Activated CD8-positive, alpha-beta T cell treated with anti-CD3 and anti-CD28 coated beads, Interleukin-2, amount 10 ng/mL, durations not matched to agents 7 days and 5 days (primary cell): ENCODE measurements at regions of chr17 and their contacts with region 1.

Region 1: GRCh38 chr17:29617125-29617480 is 5.6 kb downstream of the CORO6 start:
- DNase-seq: peak; percentile 95
- ATAC-seq: peak; percentile 65
- H3K4me3 Mint-ChIP-seq: peak overlapping the region; percentile 81
- H3K27ac Mint-ChIP-seq: peak overlapping the region; percentile 94
- H3K4me1 Mint-ChIP-seq: peaks cover 64% of the 10 kb centered on the region
- H3K27me3 Mint-ChIP-seq: peaks cover 3% of the 10 kb centered on the region

Region 2: DNA sequence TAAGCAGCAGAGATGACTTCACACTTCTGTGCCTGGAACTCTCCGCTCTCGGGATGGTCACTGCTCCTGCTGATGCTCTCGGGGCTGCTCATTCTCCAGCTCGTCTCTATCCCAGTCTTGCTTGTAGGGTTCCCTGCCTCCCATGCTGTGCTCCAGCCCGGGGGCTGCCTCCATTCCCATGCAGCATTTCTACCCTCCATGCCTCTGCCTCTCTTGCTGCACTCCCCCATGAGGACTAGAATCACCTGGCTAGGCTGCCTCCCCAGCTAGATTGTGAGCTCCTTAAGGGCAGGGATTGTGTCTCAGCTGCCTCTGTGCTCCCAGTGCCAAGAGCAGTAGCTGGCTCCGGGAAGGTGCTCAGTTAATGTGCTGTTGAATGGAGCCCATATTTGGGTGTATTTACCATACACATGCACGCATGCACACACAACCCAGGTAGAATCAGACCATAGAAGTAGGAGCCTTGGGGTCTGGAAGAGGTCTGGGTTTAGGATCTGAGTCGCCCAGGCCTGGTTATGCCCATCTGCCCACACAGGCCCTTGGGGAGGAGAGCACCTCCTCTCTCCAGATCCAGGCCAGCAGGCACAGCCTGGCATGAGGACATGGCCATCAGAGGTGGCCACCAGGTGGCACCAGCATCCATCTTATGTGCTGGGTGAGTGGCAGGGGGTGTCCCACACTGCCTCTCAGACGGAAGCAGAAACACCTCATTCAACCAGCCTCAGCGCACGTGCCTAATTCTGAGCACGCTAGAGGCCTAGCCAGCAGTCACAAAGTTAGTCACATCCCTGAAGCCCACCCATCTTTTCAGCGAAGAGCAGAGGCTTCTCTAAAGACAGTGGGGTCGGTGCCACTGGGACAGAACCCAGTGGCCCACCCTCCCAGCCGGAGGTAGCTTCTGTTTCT is 37.0 kb before region 1 on chr17:
- CTCF ChIA-PET with region 1: interaction called, 99 read pairs
- POLR2A ChIA-PET with region 1: interaction called, 23 read pairs
- DNase-seq: peak; percentile 92
- ATAC-seq: peak; percentile 97
- H3K4me3 Mint-ChIP-seq: no peak overlapping the region
- H3K27ac Mint-ChIP-seq: peak overlapping the region; percentile 84
- H3K4me1 Mint-ChIP-seq: peaks cover 30% of the 10 kb centered on the region
- H3K27me3 Mint-ChIP-seq: no peaks in the 10 kb centered on the region

Region 3: DNA sequence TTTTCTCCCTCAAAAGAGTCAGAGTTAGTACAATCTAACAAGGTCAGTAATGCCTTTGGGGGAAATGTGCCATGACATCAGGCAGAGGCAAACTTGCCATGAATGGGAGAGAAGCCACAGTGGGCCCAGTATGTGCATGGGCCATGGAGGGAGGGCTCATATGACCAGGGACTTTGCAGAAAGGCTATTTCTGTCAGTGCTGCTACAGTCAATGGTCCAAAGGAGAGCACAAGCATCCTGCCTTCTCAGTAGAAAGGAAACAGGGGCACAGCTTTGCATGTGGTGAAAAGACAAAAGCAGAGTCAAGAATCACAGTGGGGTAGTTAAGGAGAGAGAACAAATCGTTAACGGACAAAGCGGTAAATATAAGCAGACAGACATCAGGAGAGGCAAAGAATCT is 16.8 kb after region 1 on chr17:
- CTCF ChIA-PET with region 1: interaction called, 110 read pairs
- POLR2A ChIA-PET with region 1: interaction called, 3 read pairs
- DNase-seq: no peak
- ATAC-seq: peak; percentile 23
- H3K4me3 Mint-ChIP-seq: no peak overlapping the region
- H3K27ac Mint-ChIP-seq: peak overlapping the region; percentile 67
- H3K4me1 Mint-ChIP-seq: peaks cover 30% of the 10 kb centered on the region
- H3K27me3 Mint-ChIP-seq: no peaks in the 10 kb centered on the region

Region 4: DNA sequence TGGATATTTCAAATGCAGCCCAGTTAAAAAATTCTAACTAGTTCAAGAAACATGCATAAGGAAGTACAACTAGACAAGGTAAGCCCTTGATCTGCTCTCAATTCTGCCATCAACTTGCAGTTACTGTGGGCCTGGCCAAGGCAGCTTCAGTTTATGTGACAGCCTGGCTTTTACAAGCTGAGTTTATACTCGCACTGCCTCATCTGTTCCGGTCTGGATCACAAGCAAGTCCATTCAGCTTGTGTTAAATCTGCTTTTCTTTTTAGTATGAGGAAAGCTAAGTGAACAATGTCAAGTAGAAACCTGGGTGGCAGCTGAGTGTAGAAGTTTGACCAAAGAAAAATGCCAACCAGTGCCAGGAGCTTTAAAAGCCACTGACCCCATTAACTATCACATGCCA is 82.2 kb after region 1 on chr17:
- CTCF ChIA-PET with region 1: interaction called, 39 read pairs
- POLR2A ChIA-PET with region 1: interaction called, 14 read pairs
- DNase-seq: no peak
- ATAC-seq: no peak
- H3K4me3 Mint-ChIP-seq: no peak overlapping the region
- H3K27ac Mint-ChIP-seq: peak overlapping the region; percentile 5
- H3K4me1 Mint-ChIP-seq: peaks cover 14% of the 10 kb centered on the region
- H3K27me3 Mint-ChIP-seq: no peaks in the 10 kb centered on the region

Region 5: GRCh38 chr17:29722411-29723198 is 105.5 kb after region 1 on chr17:
- CTCF ChIA-PET with region 1: interaction called, 13 read pairs
- POLR2A ChIA-PET with region 1: interaction called, 5 read pairs
- DNase-seq: peak; percentile 41
- ATAC-seq: peak; percentile 73
- H3K4me3 Mint-ChIP-seq: peak overlapping the region; percentile 3
- H3K27ac Mint-ChIP-seq: peak overlapping the region; percentile 20
- H3K4me1 Mint-ChIP-seq: peaks cover 55% of the 10 kb centered on the region
- H3K27me3 Mint-ChIP-seq: no peaks in the 10 kb centered on the region

Region 6: DNA sequence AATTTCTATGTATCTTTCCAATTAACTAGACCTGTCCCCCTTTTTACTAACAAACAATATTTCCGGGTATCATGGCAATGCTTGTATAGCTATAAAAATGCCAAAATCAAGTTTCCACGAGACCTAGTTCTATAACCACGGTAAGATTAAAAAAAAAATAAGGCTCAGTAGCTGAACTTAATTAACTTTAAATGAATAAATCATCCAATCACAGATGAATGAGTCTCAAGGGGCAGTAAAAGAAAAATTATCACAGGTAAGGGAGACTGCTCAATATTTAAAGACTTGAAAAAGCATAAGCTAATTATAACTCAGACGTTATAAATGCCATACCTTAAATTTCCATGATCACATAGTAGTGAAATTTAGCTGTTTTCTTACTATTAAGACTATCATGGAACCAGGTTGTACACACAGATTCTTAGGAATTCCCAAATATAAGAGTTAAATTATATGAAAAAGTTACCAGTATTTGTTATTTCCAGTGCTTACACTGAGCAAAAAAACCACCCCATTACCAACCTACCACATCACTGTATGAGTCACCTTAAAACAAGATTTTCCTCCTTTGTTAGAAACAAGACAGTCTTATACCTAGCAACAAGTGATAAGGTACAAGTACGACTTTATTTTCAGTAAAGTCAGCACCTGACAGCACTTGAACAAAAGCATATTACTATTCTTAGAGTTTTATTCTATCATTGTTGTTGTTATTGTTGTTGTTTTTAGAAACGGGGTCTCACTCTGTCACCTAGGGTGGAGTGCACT is 292.3 kb after region 1 on chr17:
- CTCF ChIA-PET with region 1: no interaction called
- POLR2A ChIA-PET with region 1: no interaction called
- DNase-seq: no peak
- ATAC-seq: no peak
- H3K4me3 Mint-ChIP-seq: no peak overlapping the region
- H3K27ac Mint-ChIP-seq: no peak overlapping the region
- H3K4me1 Mint-ChIP-seq: peaks cover 7% of the 10 kb centered on the region
- H3K27me3 Mint-ChIP-seq: no peaks in the 10 kb centered on the region

Region 7: DNA sequence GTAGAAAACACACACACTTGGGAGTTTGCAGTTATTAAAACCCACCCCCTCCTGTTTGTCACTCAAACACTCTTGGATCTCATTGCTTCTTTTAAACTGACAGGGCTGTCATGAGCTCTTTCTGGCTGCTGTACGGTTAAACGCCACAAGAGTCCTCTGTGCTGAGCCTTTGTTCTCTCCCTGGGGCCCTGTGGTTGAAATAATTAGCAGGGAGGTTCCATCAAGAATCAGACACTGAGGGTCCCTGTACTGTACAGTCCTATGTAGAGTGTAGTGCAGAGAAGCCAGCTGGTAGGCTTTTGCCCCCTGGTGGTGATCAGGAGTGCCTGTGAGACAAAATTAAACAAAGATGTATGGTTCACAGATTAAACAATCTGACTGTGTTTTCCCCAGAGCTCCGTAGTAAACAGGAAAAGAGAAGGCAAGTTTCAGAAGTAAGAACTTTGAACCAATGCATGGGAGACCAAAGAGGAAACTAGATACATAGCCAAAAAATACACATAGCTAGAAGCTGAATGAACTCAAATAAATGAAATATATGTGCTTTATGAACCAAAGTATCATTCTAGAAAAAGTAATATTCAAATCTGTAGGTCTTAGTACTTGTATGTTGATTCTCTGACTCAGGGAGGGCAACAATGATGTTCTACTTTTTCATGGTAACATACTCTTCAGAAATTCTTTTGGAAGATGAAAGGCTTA is 314.3 kb after region 1 on chr17:
- CTCF ChIA-PET with region 1: interaction called, 43 read pairs
- POLR2A ChIA-PET with region 1: interaction called, 20 read pairs
- DNase-seq: peak; percentile 84
- ATAC-seq: peak; percentile 80
- H3K4me3 Mint-ChIP-seq: no peak overlapping the region
- H3K27ac Mint-ChIP-seq: no peak overlapping the region
- H3K4me1 Mint-ChIP-seq: peaks cover 16% of the 10 kb centered on the region
- H3K27me3 Mint-ChIP-seq: no peaks in the 10 kb centered on the region